ENCODE measurements at regions of chrX and their contacts with region 1.

Region 1: DNA sequence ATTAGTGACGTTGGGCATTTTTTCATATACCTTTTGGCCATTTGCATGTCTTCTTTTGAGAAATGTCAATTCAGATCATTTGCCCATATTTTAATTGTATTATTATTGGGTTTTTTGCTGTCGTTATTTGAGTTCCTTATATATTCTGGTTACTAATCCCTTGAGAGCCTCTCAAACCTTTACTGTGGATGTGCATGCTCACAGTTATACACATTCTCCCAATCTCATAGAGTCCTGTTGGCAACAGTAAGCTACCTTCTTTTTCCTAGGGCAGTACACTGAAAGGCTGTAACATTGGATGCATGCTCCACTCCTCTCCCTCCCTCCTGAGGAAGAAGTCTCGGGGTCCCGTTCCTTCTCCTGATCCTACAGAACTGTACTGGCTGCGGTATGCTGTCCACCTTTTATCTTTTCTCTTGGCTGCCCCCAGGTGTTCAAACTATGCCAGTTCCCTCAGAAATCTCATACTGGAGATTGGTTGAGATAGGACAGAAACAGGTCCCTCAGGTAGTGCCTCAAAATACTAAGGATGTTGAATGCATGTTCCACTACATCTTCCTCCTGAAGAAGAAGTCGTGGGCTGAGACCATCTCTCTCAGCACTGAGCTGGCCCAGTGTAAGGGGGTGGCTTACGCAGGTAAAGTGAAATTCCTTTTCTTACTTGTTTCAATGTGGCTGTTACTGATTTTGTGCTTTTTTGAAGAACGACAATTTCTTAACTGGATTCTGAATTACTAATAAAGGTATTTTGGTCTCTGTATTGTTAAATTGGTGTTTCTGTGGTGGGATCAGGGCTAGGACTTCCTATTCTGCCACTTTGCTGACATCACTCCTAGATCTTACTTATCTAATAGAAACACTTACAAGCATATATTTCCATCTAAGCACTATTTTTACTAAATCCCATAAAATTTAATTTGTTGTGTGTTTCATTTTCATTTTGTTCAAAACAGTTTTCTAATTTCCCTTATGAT is 145.4 kb upstream of the HUWE1 start:
- DNase-seq: peak; percentile 47 to 58
- H3K4me3 ChIP-seq: no peak overlapping the region
- H3K4me3 Mint-ChIP-seq: no peak overlapping the region
- H3K27ac Mint-ChIP-seq: no peak overlapping the region
- H3K4me1 ChIP-seq: no peaks in the 10 kb centered on the region
- H3K4me1 Mint-ChIP-seq: no peaks in the 10 kb centered on the region
- H3K27me3 ChIP-seq: no peaks in the 10 kb centered on the region
- H3K27me3 Mint-ChIP-seq: peaks cover 5% of the 10 kb centered on the region
- CTCF ChIP-seq: peak; percentile 28 to 56

Region 2: GRCh38 chrX:53683556-53684414 is 148.2 kb before region 1 on chrX:
- CTCF ChIA-PET with region 1: no interaction called
- POLR2A ChIA-PET with region 1: no interaction called
- intact Hi-C with region 1: loop called (anchors 5 kb)
- DNase-seq: peak; percentile 91 to 96
- H3K4me3 ChIP-seq: peak overlapping the region; percentile 81
- H3K4me3 Mint-ChIP-seq: peak overlapping the region; percentile 94
- H3K27ac Mint-ChIP-seq: peak overlapping the region; percentile 91
- H3K4me1 ChIP-seq: no peaks in the 10 kb centered on the region
- H3K4me1 Mint-ChIP-seq: peaks cover 6% of the 10 kb centered on the region
- H3K27me3 ChIP-seq: no peaks in the 10 kb centered on the region
- H3K27me3 Mint-ChIP-seq: no peaks in the 10 kb centered on the region
- CTCF ChIP-seq: no peak

Region 3: DNA sequence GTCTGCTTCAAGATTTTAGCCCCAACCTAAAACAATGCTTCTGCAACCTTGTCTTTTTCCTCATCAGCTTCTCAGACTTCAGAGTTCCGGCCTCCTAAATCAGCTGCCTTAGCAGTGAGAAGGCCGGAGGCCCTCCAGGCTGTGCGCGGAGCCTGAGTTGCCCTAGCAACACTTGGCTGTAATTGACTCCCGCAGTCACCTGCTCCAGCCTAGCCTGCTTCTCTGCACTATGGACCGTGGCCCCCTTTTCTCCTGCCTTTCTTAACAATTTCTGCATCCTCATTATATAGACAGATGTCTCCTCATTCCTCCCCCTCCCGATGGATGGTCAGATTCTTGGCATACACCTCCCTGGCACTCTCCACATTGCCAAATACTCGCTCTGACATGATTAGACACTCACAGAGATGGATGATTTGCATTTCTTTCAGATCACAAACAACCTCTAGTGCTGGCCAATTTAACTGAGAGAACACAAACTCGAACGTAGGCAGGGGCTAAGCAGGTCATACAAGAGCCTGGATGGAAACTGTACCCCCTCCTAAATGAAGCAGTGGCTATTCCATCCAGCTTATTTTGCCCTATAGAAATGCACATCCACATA is 135.9 kb before region 1 on chrX:
- CTCF ChIA-PET with region 1: no interaction called
- POLR2A ChIA-PET with region 1: no interaction called
- intact Hi-C with region 1: loop called (anchors 5 kb)
- DNase-seq: no peak
- H3K4me3 ChIP-seq: no peak overlapping the region
- H3K4me3 Mint-ChIP-seq: no peak overlapping the region
- H3K27ac Mint-ChIP-seq: no peak overlapping the region
- H3K4me1 ChIP-seq: no peaks in the 10 kb centered on the region
- H3K4me1 Mint-ChIP-seq: no peaks in the 10 kb centered on the region
- H3K27me3 ChIP-seq: no peaks in the 10 kb centered on the region
- H3K27me3 Mint-ChIP-seq: no peaks in the 10 kb centered on the region
- CTCF ChIP-seq: no peak

Measured in Caco-2 (cell line).